ENCODE measurements at regions of chr20 and their contacts with region 1.

Region 1: DNA sequence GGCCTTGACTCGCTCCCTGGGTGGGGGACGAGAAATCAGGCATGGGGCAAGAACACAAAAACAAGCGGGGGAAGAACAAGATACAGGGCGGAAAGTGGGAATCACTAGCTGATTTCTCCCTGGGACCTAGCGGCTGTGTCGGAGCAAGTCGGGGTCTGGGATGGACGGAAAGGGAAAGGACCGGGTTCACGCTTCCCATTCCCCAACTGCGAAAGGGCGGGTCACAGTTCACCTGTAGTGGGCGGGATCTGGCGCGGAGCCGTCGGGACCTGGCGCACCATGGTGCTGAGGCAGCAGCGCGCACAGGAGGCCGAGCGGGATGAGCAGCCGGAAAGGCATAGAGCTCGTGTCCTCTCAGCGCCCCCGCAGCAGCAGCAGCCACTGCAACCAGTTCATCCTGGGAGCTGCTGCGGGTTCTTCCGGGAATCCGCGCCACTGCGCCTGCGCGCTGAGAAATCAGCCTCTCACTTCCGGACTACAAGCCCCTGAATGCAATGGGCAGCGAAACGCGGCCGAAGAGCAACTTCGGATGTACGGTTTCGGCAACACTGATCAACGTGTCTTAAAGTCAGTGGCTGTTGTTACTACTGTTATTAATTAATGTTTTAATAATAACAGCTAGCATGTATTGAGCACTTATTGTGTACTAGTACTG is at the start of gene EDEM2:
- DNase-seq: peak; percentile 96
- H3K4me3 ChIP-seq: peak within 1 kb of the TSS; percentile 66
- H3K27ac ChIP-seq: peak within 1 kb of the TSS; percentile 90
- H3K4me1 ChIP-seq: peaks cover 8% of the 10 kb centered on the region
- H3K27me3 ChIP-seq: no peaks in the 10 kb centered on the region
- CTCF ChIP-seq: no peak
- total RNA-seq, gene EDEM2: 28.0 to 36.0 TPM

Region 2: GRCh38 chr20:35273449-35273848 is 126.4 kb after region 1 on chr20:
- intact Hi-C with region 1: loop called (anchors 5 kb)
- DNase-seq: no peak
- H3K4me3 ChIP-seq: no peak overlapping the region
- H3K27ac ChIP-seq: no peak overlapping the region
- H3K4me1 ChIP-seq: peaks cover 5% of the 10 kb centered on the region
- H3K27me3 ChIP-seq: no peaks in the 10 kb centered on the region
- CTCF ChIP-seq: no peak

Region 3: GRCh38 chr20:35750611-35751010 is 603.6 kb after region 1 on chr20:
- intact Hi-C with region 1: no loop called
- DNase-seq: no peak
- H3K4me3 ChIP-seq: no peak overlapping the region
- H3K27ac ChIP-seq: no peak overlapping the region
- H3K4me1 ChIP-seq: no peaks in the 10 kb centered on the region
- H3K27me3 ChIP-seq: no peaks in the 10 kb centered on the region
- CTCF ChIP-seq: no peak

Measured in colonic mucosa (tissue), 4 donors.